ENCODE measurements at regions of chr19 and their contacts with region 1.

Region 1: DNA sequence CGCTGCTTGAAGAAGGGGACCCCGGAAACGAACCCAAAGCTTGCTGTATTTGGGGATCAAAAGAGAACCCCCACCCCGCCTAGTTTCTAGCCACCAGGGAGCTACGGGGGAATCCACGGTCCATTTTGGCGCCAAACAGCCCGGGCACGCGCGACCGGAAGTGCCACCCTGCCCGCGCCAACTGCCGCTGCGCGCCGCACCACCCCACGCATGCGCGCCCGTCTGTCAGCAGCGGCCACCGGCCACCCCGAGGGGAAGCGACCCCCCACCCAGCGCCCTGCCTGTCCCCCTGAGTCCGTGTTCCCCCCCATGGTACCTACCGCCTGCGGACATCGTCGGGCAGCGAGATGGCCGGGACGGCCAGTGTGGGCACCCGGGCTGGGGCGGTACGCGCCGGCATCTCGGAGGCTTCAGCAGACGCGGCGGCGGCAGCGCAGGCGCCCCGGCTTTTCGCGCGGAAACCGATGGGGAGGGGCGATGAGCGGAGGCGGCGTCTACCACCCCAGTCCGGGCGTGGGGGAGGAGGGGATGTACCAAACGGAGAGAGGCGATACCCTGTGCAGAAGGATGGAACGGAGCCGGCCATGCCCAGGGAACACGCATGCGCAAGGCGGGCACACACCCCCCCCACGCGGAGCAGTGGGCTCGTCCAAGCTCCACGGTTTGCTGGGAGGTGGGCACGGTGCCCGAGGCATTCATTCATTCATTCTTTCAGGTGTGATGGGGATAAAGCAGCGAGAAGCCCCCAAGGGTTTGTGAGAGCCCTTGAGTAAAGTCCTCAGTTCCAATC is at the start of gene DNMT1:
- DNase-seq: peak; percentile 89 to 95 (median 93)
- H3K4me3 ChIP-seq: peak within 1 kb of the TSS; percentile 82 to 95 (median 82)
- H3K4me3 Mint-ChIP-seq: peak within 1 kb of the TSS; percentile 88 to 91
- H3K27ac ChIP-seq: peak within 1 kb of the TSS; percentile 55 to 76
- H3K27ac Mint-ChIP-seq: peak within 1 kb of the TSS; percentile 68 to 92 (median 85)
- H3K4me1 ChIP-seq: peaks cover 40 to 50% of the 10 kb centered on the region in 2 donors
- H3K4me1 Mint-ChIP-seq: peaks cover 29% of the 10 kb centered on the region
- H3K27me3 ChIP-seq: no peaks in the 10 kb centered on the region
- H3K27me3 Mint-ChIP-seq: no peaks in the 10 kb centered on the region
- CTCF ChIP-seq: no peak
- polyA plus RNA-seq, gene DNMT1: 17.6 to 72.5 (median 19.0) TPM

Region 2: DNA sequence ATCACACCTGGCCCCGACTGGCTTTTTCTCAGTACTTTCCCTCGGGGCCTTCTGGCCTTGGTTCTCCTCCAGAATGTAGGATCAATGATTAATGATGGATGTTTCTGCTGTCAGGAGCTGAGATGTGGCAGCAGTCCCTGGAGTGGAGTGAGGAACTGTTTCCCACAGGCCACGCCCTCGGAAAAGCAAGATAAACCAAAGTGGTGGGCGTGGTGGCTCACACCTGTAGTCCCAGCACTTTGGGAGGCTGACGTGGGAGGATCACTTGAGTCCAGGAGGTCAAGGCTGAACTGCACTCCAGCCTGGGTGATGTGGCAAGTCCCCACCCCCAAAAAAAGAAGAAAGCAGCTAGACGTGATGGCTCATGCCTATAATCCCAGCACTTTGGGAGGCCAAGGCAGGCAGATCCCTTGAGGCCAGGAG is 115.7 kb before region 1 on chr19:
- intact Hi-C with region 1: no loop called
- DNase-seq: no peak
- H3K4me3 ChIP-seq: no peak overlapping the region
- H3K4me3 Mint-ChIP-seq: no peak overlapping the region
- H3K27ac ChIP-seq: no peak overlapping the region
- H3K27ac Mint-ChIP-seq: no peak overlapping the region
- H3K4me1 ChIP-seq: no peaks in the 10 kb centered on the region
- H3K4me1 Mint-ChIP-seq: peaks cover 4% of the 10 kb centered on the region
- H3K27me3 ChIP-seq: no peaks in the 10 kb centered on the region
- H3K27me3 Mint-ChIP-seq: peaks cover 12 to 29% (median 15%) of the 10 kb centered on the region in 3 donors
- CTCF ChIP-seq: no peak

Region 3: GRCh38 chr19:10106100-10106936 is 88.4 kb before region 1 on chr19 and contains the start of gene PPAN:
- intact Hi-C with region 1: loop called in 1 of 2 experiments (anchors 10 kb)
- DNase-seq: peak; percentile 98 to 99 (median 99)
- H3K4me3 ChIP-seq: peak within 1 kb of the TSS; percentile 49 to 77 (median 62)
- H3K4me3 Mint-ChIP-seq: peak within 1 kb of the TSS; percentile 72 to 83
- H3K27ac ChIP-seq: peak within 1 kb of the TSS in 1 of 2 donors; percentile 72
- H3K27ac Mint-ChIP-seq: peak within 1 kb of the TSS; percentile 65 to 92 (median 85)
- H3K4me1 ChIP-seq: peaks cover 50 to 63% of the 10 kb centered on the region in 2 donors
- H3K4me1 Mint-ChIP-seq: peaks cover 52% of the 10 kb centered on the region
- H3K27me3 ChIP-seq: no peaks in the 10 kb centered on the region
- H3K27me3 Mint-ChIP-seq: peaks cover 1 to 5% (median 3%) of the 10 kb centered on the region in 3 donors
- CTCF ChIP-seq: no peak
- polyA plus RNA-seq, gene PPAN: 7.2 to 26.2 (median 7.6) TPM

Region 4: GRCh38 chr19:10120538-10121189 is 74.0 kb before region 1 on chr19:
- intact Hi-C with region 1: loop called in 1 of 2 experiments (anchors 10 kb)
- DNase-seq: no peak
- H3K4me3 ChIP-seq: no peak overlapping the region
- H3K4me3 Mint-ChIP-seq: no peak overlapping the region
- H3K27ac ChIP-seq: no peak overlapping the region
- H3K27ac Mint-ChIP-seq: peak overlapping the region in 1 of 7 donors; percentile 60
- H3K4me1 ChIP-seq: peaks cover 33 to 44% of the 10 kb centered on the region in 2 donors
- H3K4me1 Mint-ChIP-seq: peaks cover 28% of the 10 kb centered on the region
- H3K27me3 ChIP-seq: no peaks in the 10 kb centered on the region
- H3K27me3 Mint-ChIP-seq: no peaks in the 10 kb centered on the region
- CTCF ChIP-seq: no peak

Region 5: GRCh38 chr19:10251792-10252694 is 57.3 kb after region 1 on chr19 and contains the start of gene MRPL4:
- intact Hi-C with region 1: loop called (anchors 5 kb)
- DNase-seq: peak; percentile 97 to 99 (median 98)
- H3K4me3 ChIP-seq: peak within 1 kb of the TSS; percentile 56 to 98 (median 86)
- H3K4me3 Mint-ChIP-seq: peak within 1 kb of the TSS; percentile 96 to 97
- H3K27ac ChIP-seq: peak within 1 kb of the TSS; percentile 47 to 88
- H3K27ac Mint-ChIP-seq: peak within 1 kb of the TSS; percentile 88 to 99 (median 94)
- H3K4me1 ChIP-seq: peaks cover 16 to 28% of the 10 kb centered on the region in 2 donors
- H3K4me1 Mint-ChIP-seq: peaks cover 12% of the 10 kb centered on the region
- H3K27me3 ChIP-seq: no peaks in the 10 kb centered on the region
- H3K27me3 Mint-ChIP-seq: peaks cover 0 to 3% (median 1%) of the 10 kb centered on the region in 3 donors
- CTCF ChIP-seq: no peak
- polyA plus RNA-seq, gene MRPL4: 20.4 to 40.2 (median 22.7) TPM

Measured in CD14-positive monocyte (primary cell).